Heart right ventricle (tissue), 16 donors: ENCODE measurements at regions of chr6 and their contacts with region 1.

Region 1: GRCh38 chr6:32785781-32786533 is 22.6 kb upstream of the HLA-DQB2 start:
- DNase-seq: peak in 1 of 2 donors; percentile 57
- ATAC-seq: peak in 7 of 8 donors; percentile 43 to 88 (median 76)
- H3K4me3 ChIP-seq: no peak overlapping the region
- H3K27ac ChIP-seq: no peak overlapping the region
- H3K4me1 ChIP-seq: peaks cover 0 to 6% (median 0%) of the 10 kb centered on the region in 9 donors
- H3K27me3 ChIP-seq: peaks cover 0 to 47% (median 26%) of the 10 kb centered on the region in 7 donors
- CTCF ChIP-seq: peak; percentile 20 to 68 (median 59)

Region 2: GRCh38 chr6:32432050-32432450 is 353.9 kb before region 1 on chr6:
- intact Hi-C with region 1: loop called in 3 of 10 experiments (anchors 5 kb)
- DNase-seq: no peak
- ATAC-seq: no peak
- H3K4me3 ChIP-seq: no peak overlapping the region
- H3K27ac ChIP-seq: no peak overlapping the region
- H3K4me1 ChIP-seq: peaks cover 0 to 4% (median 0%) of the 10 kb centered on the region in 9 donors
- H3K27me3 ChIP-seq: peaks cover 0 to 8% (median 0%) of the 10 kb centered on the region in 7 donors
- CTCF ChIP-seq: peak in 8 of 9 donors; percentile 17 to 67 (median 60)